ENCODE measurements at regions of chr12 and their contacts with region 1.

Region 1: DNA sequence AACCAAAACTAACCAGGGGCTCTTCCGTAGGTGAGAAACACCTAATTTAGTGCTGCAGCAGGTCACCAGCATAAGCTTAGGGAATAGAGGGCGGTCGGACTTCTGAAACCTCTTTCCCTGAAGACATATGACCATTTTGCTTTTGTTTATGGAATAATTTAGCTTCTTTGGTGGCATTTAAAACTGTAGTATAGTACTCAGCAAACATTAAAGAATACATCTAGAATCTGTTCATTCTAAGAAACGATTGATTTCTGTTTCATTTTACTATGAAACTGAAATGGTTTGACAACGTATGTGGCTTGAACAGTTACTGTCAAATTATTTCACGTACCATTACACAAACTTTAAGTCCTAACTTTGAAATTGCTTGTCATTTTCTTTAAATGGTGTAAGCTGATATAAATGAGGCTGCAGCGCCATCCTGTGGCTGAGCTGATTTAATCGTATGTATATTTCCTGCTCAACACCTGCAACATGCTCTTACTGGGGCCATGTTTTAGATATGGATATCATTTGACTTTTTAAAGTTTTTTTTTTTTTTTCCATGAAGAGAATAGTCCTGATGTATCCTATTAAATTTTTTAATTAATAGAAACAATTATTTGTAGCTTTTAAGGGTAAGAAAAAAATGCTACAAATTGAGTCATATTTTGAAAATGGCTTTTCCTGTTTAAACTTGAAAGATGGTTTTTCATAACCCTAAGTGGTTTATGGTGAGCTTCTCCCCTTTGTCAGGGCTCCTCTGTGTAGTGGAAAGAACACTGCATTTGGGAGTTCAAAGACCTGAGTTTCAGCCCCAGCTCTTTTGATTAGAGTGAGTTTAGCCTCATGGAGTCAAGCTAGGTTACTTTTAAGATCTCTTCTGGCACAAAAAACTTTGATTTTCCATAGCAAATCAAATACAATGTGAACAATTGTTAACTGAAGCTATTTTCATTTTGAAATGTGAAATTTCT is 27.4 kb downstream of the CFAP54 start:
- DNase-seq: peak; percentile 59
- ATAC-seq: peak; percentile 54
- H3K4me3 Mint-ChIP-seq: no peak overlapping the region
- H3K27ac Mint-ChIP-seq: no peak overlapping the region
- H3K4me1 Mint-ChIP-seq: peaks cover 21% of the 10 kb centered on the region
- H3K27me3 Mint-ChIP-seq: no peaks in the 10 kb centered on the region
- CTCF ChIP-seq: no peak

Region 2: DNA sequence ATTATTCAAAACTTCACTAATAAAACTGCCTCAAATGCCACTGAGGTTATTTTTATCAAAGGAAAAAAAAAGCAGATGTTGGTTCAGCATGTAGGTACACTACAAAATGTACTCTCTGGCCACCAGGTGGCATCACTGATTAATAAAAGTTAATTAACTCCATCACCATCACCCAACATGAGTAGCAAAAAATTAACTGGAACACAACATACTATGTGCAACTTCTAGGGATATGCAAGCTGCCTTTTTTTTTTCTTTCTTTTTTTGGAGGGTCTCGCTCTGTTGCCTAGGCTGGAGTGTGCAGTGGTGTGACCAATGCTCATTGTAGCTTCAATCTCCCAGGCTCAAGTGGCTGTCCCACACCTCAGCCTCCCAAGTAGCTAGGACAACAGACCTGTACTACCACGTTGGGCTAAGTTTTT is 1399.6 kb before region 1 on chr12:
- CTCF ChIA-PET with region 1: interaction called, 5 read pairs
- POLR2A ChIA-PET with region 1: no interaction called
- intact Hi-C with region 1: loop called (anchors 2 kb)
- DNase-seq: no peak
- ATAC-seq: peak; percentile 84
- H3K4me3 Mint-ChIP-seq: no peak overlapping the region
- H3K27ac Mint-ChIP-seq: no peak overlapping the region
- H3K4me1 Mint-ChIP-seq: peaks cover 3% of the 10 kb centered on the region
- H3K27me3 Mint-ChIP-seq: no peaks in the 10 kb centered on the region
- CTCF ChIP-seq: no peak

Region 3: DNA sequence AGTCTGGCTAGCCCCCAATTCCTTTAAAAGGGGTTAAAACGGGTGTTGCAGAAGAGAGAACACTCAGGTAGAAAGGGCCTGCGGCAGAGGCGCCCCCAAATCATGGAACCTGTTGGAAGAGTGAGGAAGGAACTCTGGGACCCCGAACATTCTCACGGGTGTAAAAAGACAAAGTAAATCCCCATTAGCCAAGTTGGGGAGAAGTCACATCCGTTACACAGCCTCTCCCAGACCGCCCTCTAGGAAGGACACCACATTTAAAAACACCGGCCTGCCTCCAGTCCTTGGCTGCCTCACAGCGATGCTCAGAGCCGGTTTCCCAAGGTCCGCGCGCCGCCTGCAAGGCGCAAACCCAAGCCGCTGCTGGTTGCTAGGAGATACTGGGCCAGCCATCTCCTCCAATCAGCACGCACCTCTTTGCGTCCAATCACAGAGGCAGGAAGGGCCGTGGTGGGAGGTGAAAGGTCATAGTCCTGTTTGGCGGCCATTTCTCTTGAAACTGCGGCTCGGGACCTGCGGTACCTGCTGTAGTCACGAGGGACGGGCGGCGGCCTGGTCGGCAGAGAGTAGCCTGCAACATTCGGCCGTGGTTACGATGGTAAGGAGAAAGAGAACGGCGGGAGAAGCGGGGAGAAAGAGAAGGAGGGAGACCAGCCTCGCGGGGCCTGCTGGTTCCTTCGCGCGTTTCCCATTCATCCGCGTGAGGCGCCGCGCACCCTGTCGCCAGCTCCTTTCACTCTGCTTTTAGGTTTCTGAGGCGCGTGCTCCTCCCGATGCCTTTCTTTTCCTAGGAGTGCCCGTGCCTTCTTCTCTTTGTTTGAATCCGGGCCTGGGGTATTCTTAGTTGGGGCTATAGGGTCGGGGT is 658.0 kb before region 1 on chr12 and contains the start of gene SNRPF:
- CTCF ChIA-PET with region 1: interaction called, 5 read pairs
- POLR2A ChIA-PET with region 1: no interaction called
- intact Hi-C with region 1: loop called (anchors 10 kb)
- DNase-seq: peak; percentile 85
- ATAC-seq: peak; percentile 97
- H3K4me3 Mint-ChIP-seq: no peak within 1 kb of the TSS
- H3K27ac Mint-ChIP-seq: peak within 1 kb of the TSS; percentile 4
- H3K4me1 Mint-ChIP-seq: peaks cover 12% of the 10 kb centered on the region
- H3K27me3 Mint-ChIP-seq: peaks cover 8% of the 10 kb centered on the region
- CTCF ChIP-seq: no peak
- total RNA-seq, gene SNRPF: 35.2 and 38.2 TPM in 2 replicates

Region 4: GRCh38 chr12:96061864-96062453 is 454.8 kb before region 1 on chr12:
- CTCF ChIA-PET with region 1: interaction called, 47 read pairs
- POLR2A ChIA-PET with region 1: no interaction called
- intact Hi-C with region 1: loop called (anchors 1 kb)
- DNase-seq: peak; percentile 37
- ATAC-seq: peak; percentile 92
- H3K4me3 Mint-ChIP-seq: no peak overlapping the region
- H3K27ac Mint-ChIP-seq: peak overlapping the region; percentile 71
- H3K4me1 Mint-ChIP-seq: peaks cover 31% of the 10 kb centered on the region
- H3K27me3 Mint-ChIP-seq: no peaks in the 10 kb centered on the region
- CTCF ChIP-seq: no peak

Region 5: GRCh38 chr12:96294831-96295230 is 221.9 kb before region 1 on chr12:
- CTCF ChIA-PET with region 1: no interaction called
- POLR2A ChIA-PET with region 1: no interaction called
- intact Hi-C with region 1: loop called (anchors 10 kb)
- DNase-seq: no peak
- ATAC-seq: no peak
- H3K4me3 Mint-ChIP-seq: no peak overlapping the region
- H3K27ac Mint-ChIP-seq: no peak overlapping the region
- H3K4me1 Mint-ChIP-seq: peaks cover 2% of the 10 kb centered on the region
- H3K27me3 Mint-ChIP-seq: no peaks in the 10 kb centered on the region
- CTCF ChIP-seq: no peak

Measured in activated B cell treated with CpG ODN at 0.5 μM for 24 hours (primary cell).